ENCODE measurements at regions of chr16 and their contacts with region 1.

Region 1: GRCh38 chr16:8326249-8326648 is 264.1 kb downstream of the TMEM114 start:
- DNase-seq: no peak
- H3K4me3 Mint-ChIP-seq: no peak overlapping the region
- H3K27ac Mint-ChIP-seq: no peak overlapping the region
- H3K4me1 Mint-ChIP-seq: no peaks in the 10 kb centered on the region
- H3K27me3 Mint-ChIP-seq: no peaks in the 10 kb centered on the region
- CTCF ChIP-seq: no peak

Region 2: GRCh38 chr16:8355675-8356074 is 29.4 kb after region 1 on chr16:
- CTCF ChIA-PET with region 1: no interaction called
- intact Hi-C with region 1: loop called (anchors 1 kb)
- DNase-seq: no peak
- H3K4me3 Mint-ChIP-seq: no peak overlapping the region
- H3K27ac Mint-ChIP-seq: no peak overlapping the region
- H3K4me1 Mint-ChIP-seq: no peaks in the 10 kb centered on the region
- H3K27me3 Mint-ChIP-seq: no peaks in the 10 kb centered on the region
- CTCF ChIP-seq: no peak

Region 3: GRCh38 chr16:8751481-8752311 is 425.4 kb after region 1 on chr16:
- CTCF ChIA-PET with region 1: no interaction called
- intact Hi-C with region 1: no loop called
- DNase-seq: peak; percentile 10
- H3K4me3 Mint-ChIP-seq: no peak overlapping the region
- H3K27ac Mint-ChIP-seq: no peak overlapping the region
- H3K4me1 Mint-ChIP-seq: peaks cover 9% of the 10 kb centered on the region
- H3K27me3 Mint-ChIP-seq: no peaks in the 10 kb centered on the region
- CTCF ChIP-seq: no peak